ENCODE measurements at regions of chr19 and their contacts with region 1.

Region 1: DNA sequence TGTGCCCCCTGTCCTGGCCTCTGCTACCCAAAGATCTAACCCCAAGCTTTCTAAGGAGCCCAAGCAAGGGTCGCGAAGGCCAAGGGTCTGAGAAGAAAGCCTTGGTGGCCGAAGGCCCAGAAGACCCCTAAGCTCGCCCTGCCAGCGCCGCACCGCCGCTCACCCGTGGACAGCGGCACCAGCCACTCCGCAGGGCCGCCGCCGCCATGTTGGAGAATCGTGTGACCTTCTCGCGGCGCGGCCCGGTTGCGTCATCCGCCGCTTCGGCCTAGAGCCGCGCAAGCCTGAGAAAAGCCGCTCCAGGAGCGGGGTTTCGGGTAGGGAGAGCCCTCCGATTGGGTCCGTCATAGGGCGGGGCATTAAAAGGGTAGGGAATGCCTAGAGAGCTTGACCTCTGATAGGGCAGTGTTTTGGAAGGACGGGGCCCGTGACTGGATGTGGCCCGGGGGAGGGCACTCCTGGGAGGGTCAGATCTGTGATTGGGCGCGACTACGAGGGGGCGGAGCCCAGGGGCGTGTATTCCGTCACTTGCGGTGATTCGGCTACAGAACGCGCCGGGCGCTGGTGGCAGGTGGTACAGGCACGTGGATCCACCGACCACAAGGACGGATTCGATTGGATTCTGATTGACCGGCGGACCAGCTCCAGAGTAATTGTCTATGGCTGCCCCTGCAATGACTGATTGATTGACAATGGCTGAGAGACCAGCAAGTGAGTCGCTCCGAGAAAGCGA is at the start of gene TIMM44:
- DNase-seq: peak; percentile 99
- ATAC-seq: peak; percentile 99
- H3K4me3 Mint-ChIP-seq: peak within 1 kb of the TSS; percentile 88
- H3K27ac Mint-ChIP-seq: peak within 1 kb of the TSS; percentile 99
- H3K4me1 Mint-ChIP-seq: peaks cover 8% of the 10 kb centered on the region; the same call in 1 of the 2 replicates
- H3K27me3 Mint-ChIP-seq: peaks cover 2% of the 10 kb centered on the region; the same call in 1 of the 2 replicates
- CTCF ChIP-seq: no peak
- total RNA-seq, gene TIMM44: 103 to 129 TPM (median 103 TPM) in 3 replicates

Region 2: GRCh38 chr19:7540761-7541491 is 402.7 kb before region 1 on chr19:
- CTCF ChIA-PET with region 1: no interaction called
- POLR2A ChIA-PET with region 1: no interaction called
- DNase-seq: peak; percentile 89
- ATAC-seq: peak; percentile 99
- H3K4me3 Mint-ChIP-seq: no peak overlapping the region
- H3K27ac Mint-ChIP-seq: no peak overlapping the region
- H3K4me1 Mint-ChIP-seq: peaks cover 4% of the 10 kb centered on the region; the same call in 1 of the 2 replicates
- H3K27me3 Mint-ChIP-seq: no peaks in the 10 kb centered on the region
- CTCF ChIP-seq: no peak

Region 3: DNA sequence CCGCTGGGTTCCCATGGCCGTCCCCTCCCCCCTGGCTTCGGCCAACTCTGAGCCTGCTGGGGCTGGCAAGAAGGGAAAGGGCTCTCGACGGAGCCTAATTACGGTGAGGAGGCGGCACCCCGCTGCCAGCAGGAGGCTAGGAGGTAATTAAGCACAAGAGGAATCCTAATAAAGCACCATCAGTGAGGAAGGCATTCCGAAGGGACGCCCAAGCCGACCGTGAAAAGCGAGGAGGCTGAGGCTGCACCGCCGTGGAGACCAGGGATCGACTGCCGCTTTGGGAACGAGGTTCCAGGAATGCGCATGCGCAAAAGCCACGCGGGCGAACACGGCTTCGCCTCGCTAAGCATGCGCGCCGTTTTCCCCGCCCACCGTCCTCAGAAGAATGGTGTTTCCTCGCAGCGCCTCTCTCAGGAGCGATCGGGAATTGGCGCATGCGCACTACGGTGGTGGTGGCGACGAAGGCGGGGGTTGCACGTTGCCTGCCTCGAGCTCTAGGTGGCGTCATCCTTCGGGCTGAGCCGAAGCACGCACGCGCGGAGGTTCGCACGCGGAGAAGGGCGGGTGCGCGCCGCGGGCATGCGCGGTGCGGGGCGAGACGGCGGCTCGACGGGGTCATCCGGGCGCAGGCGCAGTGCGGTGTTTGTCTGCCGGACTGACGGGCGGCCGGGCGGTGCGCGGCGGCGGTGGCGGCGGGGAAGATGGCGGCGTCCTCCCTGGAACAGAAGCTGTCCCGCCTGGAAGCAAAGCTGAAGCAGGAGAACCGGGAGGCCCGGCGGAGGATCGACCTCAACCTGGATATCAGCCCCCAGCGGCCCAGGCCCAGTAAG is 40.2 kb before region 1 on chr19 and contains the start of gene MAP2K7:
- CTCF ChIA-PET with region 1: interaction called, 10 read pairs
- POLR2A ChIA-PET with region 1: interaction called, 4 read pairs
- DNase-seq: peak; percentile 100
- ATAC-seq: peak; percentile 87
- H3K4me3 Mint-ChIP-seq: peak within 1 kb of the TSS; percentile 90
- H3K27ac Mint-ChIP-seq: peak within 1 kb of the TSS; percentile 97
- H3K4me1 Mint-ChIP-seq: peaks cover 20% of the 10 kb centered on the region
- H3K27me3 Mint-ChIP-seq: peaks cover 13% of the 10 kb centered on the region
- CTCF ChIP-seq: no peak
- total RNA-seq, gene MAP2K7: 39.4 to 46.9 TPM (median 46.3 TPM) in 3 replicates

Region 4: GRCh38 chr19:7928736-7929701 is 14.6 kb before region 1 on chr19:
- CTCF ChIA-PET with region 1: interaction called, 39 read pairs
- POLR2A ChIA-PET with region 1: interaction called, 13 read pairs
- DNase-seq: peak; percentile 84
- ATAC-seq: peak; percentile 63
- H3K4me3 Mint-ChIP-seq: no peak overlapping the region
- H3K27ac Mint-ChIP-seq: peak overlapping the region; percentile 70; the same call in 1 of the 2 replicates
- H3K4me1 Mint-ChIP-seq: peaks cover 4% of the 10 kb centered on the region; the same call in 1 of the 2 replicates
- H3K27me3 Mint-ChIP-seq: no peaks in the 10 kb centered on the region
- CTCF ChIP-seq: peak; percentile 71

Region 5: DNA sequence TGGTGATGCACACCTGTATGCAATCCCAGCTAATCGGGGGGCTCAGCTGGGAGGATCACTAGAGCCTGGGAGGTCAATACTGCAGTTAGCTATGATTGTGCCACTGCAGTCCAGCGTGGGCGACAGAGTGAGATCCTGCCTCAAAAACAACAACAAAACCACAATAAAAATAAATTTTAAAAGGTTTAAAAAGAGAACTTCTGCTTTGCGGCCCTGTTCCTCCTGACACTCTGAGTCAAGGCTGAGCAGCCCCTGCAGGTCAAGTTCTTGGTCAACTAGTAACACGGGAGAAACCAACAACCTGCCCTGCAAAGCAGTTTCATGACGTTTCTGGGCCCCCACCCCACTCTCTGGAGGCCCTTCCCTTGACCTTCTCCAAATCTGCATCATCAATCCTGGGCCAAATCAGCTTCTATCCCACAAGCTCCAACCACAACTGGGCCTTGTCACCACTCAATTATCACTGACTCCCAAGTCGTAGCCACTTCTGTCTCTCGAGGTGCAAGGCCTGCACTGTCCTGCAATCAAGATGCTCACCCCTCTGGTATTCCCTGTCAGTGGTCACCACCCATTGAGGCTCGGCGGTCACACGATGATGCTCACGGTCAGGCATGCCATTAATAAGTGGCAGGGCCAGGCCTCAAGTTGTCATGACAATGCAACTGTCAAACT is 54.3 kb after region 1 on chr19:
- CTCF ChIA-PET with region 1: interaction called, 44 read pairs
- POLR2A ChIA-PET with region 1: interaction called, 4 read pairs
- DNase-seq: no peak
- ATAC-seq: no peak
- H3K4me3 Mint-ChIP-seq: no peak overlapping the region
- H3K27ac Mint-ChIP-seq: 0 out of 2 replicates have a peak overlapping the region, but pooled peaks have one; percentile 67
- H3K4me1 Mint-ChIP-seq: peaks cover 59% of the 10 kb centered on the region
- H3K27me3 Mint-ChIP-seq: no peaks in the 10 kb centered on the region
- CTCF ChIP-seq: no peak

Region 6: GRCh38 chr19:8028951-8029491 is 85.4 kb after region 1 on chr19:
- CTCF ChIA-PET with region 1: interaction called, 11 read pairs
- POLR2A ChIA-PET with region 1: no interaction called
- DNase-seq: peak; percentile 63
- ATAC-seq: peak; percentile 69
- H3K4me3 Mint-ChIP-seq: no peak overlapping the region
- H3K27ac Mint-ChIP-seq: no peak overlapping the region; the same call in 1 of the 2 replicates
- H3K4me1 Mint-ChIP-seq: peaks cover 17% of the 10 kb centered on the region
- H3K27me3 Mint-ChIP-seq: no peaks in the 10 kb centered on the region
- CTCF ChIP-seq: no peak

Region 7: DNA sequence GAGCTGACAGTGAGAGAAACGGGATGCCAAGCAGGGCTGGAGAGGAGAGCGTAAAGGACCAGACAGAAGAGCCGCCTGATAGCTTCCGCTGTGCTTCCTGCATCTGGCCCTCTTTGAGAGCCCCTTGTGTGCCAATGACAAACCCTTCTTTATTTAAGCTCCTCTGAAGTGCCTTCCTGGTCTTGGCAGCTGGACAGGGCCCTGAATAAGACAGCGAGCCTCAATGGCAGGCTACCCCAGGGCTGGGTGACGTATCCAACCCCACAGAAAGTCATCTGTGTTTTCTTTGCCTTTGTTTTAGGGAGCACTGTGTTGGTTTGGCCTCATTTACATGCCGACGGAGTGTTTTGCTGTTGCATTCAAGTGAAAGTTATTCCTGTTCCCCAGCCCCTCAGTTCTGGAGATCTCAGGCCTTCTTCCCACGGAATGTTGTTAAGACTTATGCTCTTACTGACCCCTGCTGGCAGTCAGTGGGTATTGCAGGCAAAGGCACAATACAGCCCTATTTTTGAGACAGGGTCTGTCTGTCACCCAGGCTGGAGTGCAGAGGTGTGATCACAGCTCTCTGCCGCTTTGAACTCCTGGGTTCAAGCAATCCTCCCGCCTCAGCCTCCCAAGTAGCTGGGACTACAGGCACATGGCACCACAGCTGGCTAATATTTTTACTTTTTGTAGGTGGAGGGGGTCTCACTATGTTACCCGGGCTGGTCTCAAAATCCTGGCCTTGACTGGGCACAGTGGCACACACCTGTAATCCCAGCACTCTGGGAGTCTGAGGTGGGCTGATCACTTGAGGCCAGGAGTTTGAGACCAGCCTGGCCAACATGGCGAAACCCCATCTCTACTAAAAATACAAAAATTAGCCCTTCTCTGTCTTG is 125.7 kb after region 1 on chr19:
- CTCF ChIA-PET with region 1: interaction called, 21 read pairs
- POLR2A ChIA-PET with region 1: interaction called, 4 read pairs
- DNase-seq: peak; percentile 73
- ATAC-seq: peak; percentile 51
- H3K4me3 Mint-ChIP-seq: no peak overlapping the region
- H3K27ac Mint-ChIP-seq: no peak overlapping the region
- H3K4me1 Mint-ChIP-seq: no peaks in the 10 kb centered on the region
- H3K27me3 Mint-ChIP-seq: no peaks in the 10 kb centered on the region; the same call in 1 of the 2 replicates
- CTCF ChIP-seq: peak; percentile 94

Region 8: DNA sequence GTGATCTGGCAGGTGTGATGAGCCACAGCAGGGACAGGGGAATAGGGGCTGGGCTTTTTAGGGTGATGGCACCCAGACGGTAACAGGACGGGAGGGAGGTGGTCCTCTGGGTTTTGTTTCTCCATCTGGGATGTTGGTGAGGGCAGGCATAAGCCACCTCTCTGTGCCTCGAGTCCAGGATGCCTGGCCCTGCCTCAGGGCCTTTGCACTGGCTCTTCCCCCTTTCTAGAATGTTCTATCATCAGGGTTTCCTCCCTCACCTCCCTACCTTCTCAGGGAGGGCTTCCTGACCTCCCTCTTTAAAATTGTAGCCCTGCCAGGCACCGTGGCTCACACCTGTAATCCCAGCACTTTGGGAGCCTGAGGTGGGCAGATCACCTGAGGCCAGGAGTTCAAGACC is 272.2 kb after region 1 on chr19:
- CTCF ChIA-PET with region 1: no interaction called
- POLR2A ChIA-PET with region 1: no interaction called
- DNase-seq: no peak
- ATAC-seq: no peak
- H3K4me3 Mint-ChIP-seq: no peak overlapping the region
- H3K27ac Mint-ChIP-seq: no peak overlapping the region
- H3K4me1 Mint-ChIP-seq: peaks cover 28% of the 10 kb centered on the region
- H3K27me3 Mint-ChIP-seq: no peaks in the 10 kb centered on the region
- CTCF ChIP-seq: no peak

Measured in WTC11 (cell line).